Ovary (tissue), 10 donors: ENCODE measurements at regions of chr9 and their contacts with region 1.

Region 1: DNA sequence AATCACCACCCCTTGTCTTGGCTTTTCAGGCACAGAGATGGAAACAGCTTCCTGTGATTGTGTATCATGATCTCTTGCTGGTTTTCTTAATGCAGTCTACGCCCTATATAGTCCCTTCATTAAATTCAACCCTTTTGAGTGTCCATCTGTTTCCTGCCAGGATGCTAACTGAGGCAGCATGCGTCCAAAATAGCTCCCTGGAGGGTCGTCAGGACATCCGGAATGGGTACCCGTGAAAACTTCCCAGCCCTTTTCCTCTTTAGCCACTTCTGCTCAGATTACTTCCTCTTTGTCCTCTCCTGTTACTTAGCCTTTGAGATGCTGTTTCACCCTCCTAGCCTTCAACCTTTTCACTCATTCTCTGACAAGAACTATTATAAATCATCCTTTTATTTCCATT is 79.8 kb upstream of the KLF9 start:
- DNase-seq: no peak
- H3K4me3 ChIP-seq: no peak overlapping the region
- H3K27ac ChIP-seq: no peak overlapping the region
- H3K4me1 ChIP-seq: peaks cover 6% of the 10 kb centered on the region
- H3K27me3 ChIP-seq: no peaks in the 10 kb centered on the region
- CTCF ChIP-seq: no peak
- EP300 ChIP-seq: no peak
- POLR2A ChIP-seq: no peak

Region 2: GRCh38 chr9:70553707-70554673 is 59.8 kb after region 1 on chr9:
- intact Hi-C with region 1: no loop called
- DNase-seq: no peak
- H3K4me3 ChIP-seq: no peak overlapping the region
- H3K27ac ChIP-seq: no peak overlapping the region
- H3K4me1 ChIP-seq: peaks cover 1% of the 10 kb centered on the region
- H3K27me3 ChIP-seq: no peaks in the 10 kb centered on the region
- CTCF ChIP-seq: no peak
- EP300 ChIP-seq: no peak
- POLR2A ChIP-seq: no peak

Region 3: GRCh38 chr9:70581214-70581954 is 87.2 kb after region 1 on chr9:
- intact Hi-C with region 1: loop called in 1 of 4 experiments (anchors 5 kb)
- DNase-seq: no peak
- H3K4me3 ChIP-seq: no peak overlapping the region
- H3K27ac ChIP-seq: no peak overlapping the region
- H3K4me1 ChIP-seq: no peaks in the 10 kb centered on the region
- H3K27me3 ChIP-seq: no peaks in the 10 kb centered on the region
- CTCF ChIP-seq: no peak
- EP300 ChIP-seq: no peak
- POLR2A ChIP-seq: no peak